Caco-2 (cell line): ENCODE measurements at regions of chr11 and their contacts with region 1.

Region 1: DNA sequence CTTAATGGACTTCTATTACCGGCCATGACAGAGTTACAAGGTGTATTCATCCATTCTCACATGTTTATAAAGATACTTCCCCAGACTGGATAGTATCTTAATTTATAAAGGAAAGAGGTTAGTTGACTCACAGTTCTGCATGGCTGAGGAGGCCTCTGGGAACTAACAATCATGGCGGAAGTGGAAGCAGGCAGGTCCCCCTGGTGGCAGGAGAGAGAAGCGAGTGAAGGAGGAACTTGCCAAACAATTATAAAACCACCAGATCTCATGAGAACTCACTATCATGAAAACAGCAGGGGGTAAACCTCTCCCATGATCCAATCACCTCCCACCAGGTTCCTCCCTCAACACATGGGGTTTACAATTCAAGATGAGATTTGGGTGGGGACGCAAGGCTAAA is 170.0 kb upstream of the PDGFD start:
- DNase-seq: peak; percentile 63 to 66
- H3K4me3 ChIP-seq: no peak overlapping the region
- H3K4me3 Mint-ChIP-seq: no peak overlapping the region
- H3K27ac Mint-ChIP-seq: no peak overlapping the region
- H3K4me1 ChIP-seq: no peaks in the 10 kb centered on the region
- H3K4me1 Mint-ChIP-seq: no peaks in the 10 kb centered on the region
- H3K27me3 ChIP-seq: no peaks in the 10 kb centered on the region
- H3K27me3 Mint-ChIP-seq: peaks cover 3% of the 10 kb centered on the region
- CTCF ChIP-seq: peak; percentile 59 to 79

Region 2: GRCh38 chr11:104134751-104135479 is 199.1 kb before region 1 on chr11:
- CTCF ChIA-PET with region 1: no interaction called
- POLR2A ChIA-PET with region 1: no interaction called
- intact Hi-C with region 1: loop called (anchors 10 kb)
- DNase-seq: peak; percentile 35 to 72
- H3K4me3 ChIP-seq: no peak overlapping the region
- H3K4me3 Mint-ChIP-seq: no peak overlapping the region
- H3K27ac Mint-ChIP-seq: no peak overlapping the region
- H3K4me1 ChIP-seq: peaks cover 11% of the 10 kb centered on the region
- H3K4me1 Mint-ChIP-seq: no peaks in the 10 kb centered on the region
- H3K27me3 ChIP-seq: no peaks in the 10 kb centered on the region
- H3K27me3 Mint-ChIP-seq: peaks cover 6% of the 10 kb centered on the region
- CTCF ChIP-seq: no peak

Region 3: DNA sequence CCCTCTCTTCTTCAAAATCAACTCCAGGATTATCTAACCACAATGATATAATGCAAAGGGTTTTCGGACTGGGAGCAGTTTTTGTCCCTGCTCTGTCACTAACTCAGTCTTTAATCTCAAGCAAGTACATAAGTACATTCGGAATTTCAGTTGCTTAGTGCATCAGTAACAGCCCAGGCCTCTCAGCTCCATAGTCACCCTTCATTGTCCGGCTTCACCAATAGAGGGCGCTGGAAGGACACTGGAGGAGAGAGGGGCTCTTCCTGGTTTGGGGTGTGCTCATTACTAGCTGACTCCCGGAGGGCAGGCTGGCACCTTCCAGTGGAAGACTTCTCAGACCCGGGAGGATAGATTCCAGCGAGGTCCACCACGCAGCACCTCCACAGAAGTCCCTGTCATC is 79.6 kb before region 1 on chr11:
- CTCF ChIA-PET with region 1: interaction called, 3 read pairs
- POLR2A ChIA-PET with region 1: no interaction called
- intact Hi-C with region 1: loop called (anchors 1 kb)
- DNase-seq: peak; percentile 59 to 67
- H3K4me3 ChIP-seq: no peak overlapping the region
- H3K4me3 Mint-ChIP-seq: no peak overlapping the region
- H3K27ac Mint-ChIP-seq: no peak overlapping the region
- H3K4me1 ChIP-seq: peaks cover 6% of the 10 kb centered on the region
- H3K4me1 Mint-ChIP-seq: peaks cover 16% of the 10 kb centered on the region
- H3K27me3 ChIP-seq: no peaks in the 10 kb centered on the region
- H3K27me3 Mint-ChIP-seq: no peaks in the 10 kb centered on the region
- CTCF ChIP-seq: peak; percentile 63 to 73